Heart right ventricle (tissue), 16 donors: ENCODE measurements at regions of chr12 and their contacts with region 1.

Region 1: GRCh38 chr12:6662906-6663742 is at the start of gene ING4:
- DNase-seq: peak; percentile 94 to 99
- ATAC-seq: peak; percentile 99 to 100 (median 100)
- H3K4me3 ChIP-seq: peak within 1 kb of the TSS; percentile 62 to 92 (median 82)
- H3K27ac ChIP-seq: peak within 1 kb of the TSS; percentile 5 to 88 (median 78)
- H3K4me1 ChIP-seq: peaks cover 0 to 32% (median 15%) of the 10 kb centered on the region in 9 donors
- H3K27me3 ChIP-seq: no peaks in the 10 kb centered on the region
- CTCF ChIP-seq: no peak
- total RNA-seq, gene ING4: 17.7 to 32.5 (median 22.6) TPM

Region 2: DNA sequence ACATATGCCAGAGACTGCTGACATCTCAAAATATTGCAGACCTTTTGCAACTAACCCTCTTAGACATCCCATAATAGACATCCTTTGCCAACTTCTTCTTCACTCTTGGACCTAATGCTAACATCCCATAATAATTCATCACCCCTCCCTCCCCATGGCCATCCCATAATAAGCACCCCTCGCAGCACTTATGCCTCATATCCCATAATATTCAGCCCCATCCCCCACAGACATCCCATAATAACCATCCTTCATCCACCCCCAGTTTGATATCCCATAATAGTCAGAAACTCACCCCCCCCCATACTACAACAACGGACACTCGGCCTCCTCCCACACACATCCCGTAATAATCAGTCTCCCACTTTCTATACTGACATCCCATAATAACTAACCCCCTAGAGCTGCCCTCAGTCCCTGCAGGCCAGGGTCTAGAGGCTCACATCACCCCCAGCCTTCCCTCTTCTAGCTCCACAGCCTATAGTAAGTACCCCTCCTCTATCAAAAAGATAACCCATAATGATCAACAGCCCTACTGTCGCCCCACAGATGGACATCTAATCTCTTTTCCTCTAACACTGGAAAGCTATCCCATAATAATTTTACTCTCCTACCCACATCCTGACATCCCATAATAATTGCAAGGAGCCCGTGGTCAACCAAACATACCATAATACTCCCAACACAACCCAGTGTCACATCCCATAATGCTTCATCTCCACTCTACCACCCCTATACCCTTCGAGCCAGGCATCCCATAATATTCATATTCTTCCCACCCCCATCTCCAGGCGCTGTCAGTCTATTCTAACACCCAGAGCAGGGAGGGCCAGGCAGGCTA is 55.2 kb before region 1 on chr12:
- intact Hi-C with region 1: loop called in 1 of 10 experiments (anchors 5 kb)
- DNase-seq: peak in 1 of 2 donors; percentile 77
- ATAC-seq: peak in 7 of 8 donors; percentile 3 to 34 (median 14)
- H3K4me3 ChIP-seq: no peak overlapping the region
- H3K27ac ChIP-seq: peak overlapping the region in 9 of 10 donors; percentile 7 to 79 (median 66)
- H3K4me1 ChIP-seq: peaks cover 19 to 59% (median 50%) of the 10 kb centered on the region in 9 donors
- H3K27me3 ChIP-seq: no peaks in the 10 kb centered on the region
- CTCF ChIP-seq: no peak

Region 3: GRCh38 chr12:6620137-6620884 is 42.8 kb before region 1 on chr12:
- intact Hi-C with region 1: loop called in 5 of 10 experiments (anchors 5 kb)
- DNase-seq: peak in 1 of 2 donors; percentile 72
- ATAC-seq: peak in 5 of 8 donors; percentile 18 to 57 (median 40)
- H3K4me3 ChIP-seq: peak overlapping the region in 8 of 10 donors; percentile 4 to 33 (median 30)
- H3K27ac ChIP-seq: no peak overlapping the region
- H3K4me1 ChIP-seq: peaks cover 0 to 18% (median 8%) of the 10 kb centered on the region in 9 donors
- H3K27me3 ChIP-seq: peaks cover 0 to 14% (median 0%) of the 10 kb centered on the region in 7 donors
- CTCF ChIP-seq: peak; percentile 24 to 74 (median 55)

Region 4: GRCh38 chr12:6688999-6689882 is 26.1 kb after region 1 on chr12 and contains the start of gene ZNF384:
- intact Hi-C with region 1: loop called in 6 of 10 experiments (anchors 1 to 2 kb)
- DNase-seq: peak; percentile 94 to 99
- ATAC-seq: peak; percentile 91 to 97 (median 96)
- H3K4me3 ChIP-seq: peak within 1 kb of the TSS; percentile 65 to 98 (median 91)
- H3K27ac ChIP-seq: peak within 1 kb of the TSS; percentile 95 to 100 (median 98)
- H3K4me1 ChIP-seq: peaks cover 3 to 55% (median 40%) of the 10 kb centered on the region in 9 donors
- H3K27me3 ChIP-seq: peaks cover 0 to 1% (median 0%) of the 10 kb centered on the region in 7 donors
- CTCF ChIP-seq: peak in 5 of 9 donors; percentile 11 to 31 (median 22)
- total RNA-seq, gene ZNF384: 25.1 to 36.0 (median 29.0) TPM

Region 5: GRCh38 chr12:6723607-6724396 is 60.7 kb after region 1 on chr12 and contains the start of gene COPS7A:
- intact Hi-C with region 1: loop called in 4 of 10 experiments (anchors 2 to 5 kb)
- DNase-seq: peak; percentile 97 to 99
- ATAC-seq: peak; percentile 99 to 100 (median 99)
- H3K4me3 ChIP-seq: peak within 1 kb of the TSS; percentile 40 to 90 (median 64)
- H3K27ac ChIP-seq: peak within 1 kb of the TSS; percentile 81 to 95 (median 88)
- H3K4me1 ChIP-seq: peaks cover 0 to 20% (median 14%) of the 10 kb centered on the region in 9 donors
- H3K27me3 ChIP-seq: no peaks in the 10 kb centered on the region
- CTCF ChIP-seq: no peak
- total RNA-seq, gene COPS7A: 67.4 to 89.8 (median 77.9) TPM